ENCODE measurements at regions of chr2 and their contacts with region 1.

Region 1: GRCh38 chr2:121356058-121356640 is 71.1 kb upstream of the TFCP2L1 start:
- DNase-seq: no peak
- H3K4me3 Mint-ChIP-seq: no peak overlapping the region
- H3K27ac Mint-ChIP-seq: no peak overlapping the region
- H3K4me1 Mint-ChIP-seq: peaks cover 2% of the 10 kb centered on the region
- H3K27me3 Mint-ChIP-seq: no peaks in the 10 kb centered on the region

Region 2: DNA sequence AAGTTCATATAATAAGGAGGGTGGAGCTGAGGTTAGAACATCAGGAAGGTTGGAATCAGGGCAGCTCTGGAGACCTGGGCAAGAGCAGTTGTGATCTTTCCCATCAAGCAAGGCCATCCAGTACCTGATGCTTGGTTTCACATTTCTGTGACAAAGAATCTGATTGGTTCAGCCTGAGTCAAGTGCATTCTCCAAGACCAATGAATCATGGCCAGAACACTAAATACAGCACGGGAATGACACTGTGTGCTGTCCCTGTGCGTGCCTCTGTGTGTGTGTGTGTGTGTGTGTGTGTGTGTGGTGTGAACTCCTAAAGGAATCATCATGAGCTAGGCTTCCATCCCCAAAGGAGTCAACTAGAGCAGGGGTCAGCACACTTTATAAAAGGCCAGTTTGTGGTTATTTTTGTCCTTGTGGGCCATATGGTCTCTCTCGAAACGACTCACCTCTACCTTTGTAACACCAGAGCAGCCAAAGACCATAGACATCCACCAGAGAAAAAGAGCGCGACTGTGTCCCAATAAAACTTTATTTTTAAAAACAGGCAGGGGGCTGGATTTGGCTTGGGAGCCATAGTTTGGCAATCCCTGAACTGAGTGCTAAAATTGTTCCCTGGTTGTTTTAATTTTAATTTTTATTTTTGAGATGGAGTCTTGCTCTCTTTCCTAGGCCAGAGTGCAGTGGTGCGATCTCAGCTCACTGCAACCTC is 910.6 kb before region 1 on chr2:
- CTCF ChIA-PET with region 1: no interaction called
- POLR2A ChIA-PET with region 1: no interaction called
- intact Hi-C with region 1: no loop called
- DNase-seq: no peak
- H3K4me3 Mint-ChIP-seq: no peak overlapping the region
- H3K27ac Mint-ChIP-seq: no peak overlapping the region
- H3K4me1 Mint-ChIP-seq: peaks cover 6% of the 10 kb centered on the region
- H3K27me3 Mint-ChIP-seq: peaks cover 40% of the 10 kb centered on the region

Region 3: DNA sequence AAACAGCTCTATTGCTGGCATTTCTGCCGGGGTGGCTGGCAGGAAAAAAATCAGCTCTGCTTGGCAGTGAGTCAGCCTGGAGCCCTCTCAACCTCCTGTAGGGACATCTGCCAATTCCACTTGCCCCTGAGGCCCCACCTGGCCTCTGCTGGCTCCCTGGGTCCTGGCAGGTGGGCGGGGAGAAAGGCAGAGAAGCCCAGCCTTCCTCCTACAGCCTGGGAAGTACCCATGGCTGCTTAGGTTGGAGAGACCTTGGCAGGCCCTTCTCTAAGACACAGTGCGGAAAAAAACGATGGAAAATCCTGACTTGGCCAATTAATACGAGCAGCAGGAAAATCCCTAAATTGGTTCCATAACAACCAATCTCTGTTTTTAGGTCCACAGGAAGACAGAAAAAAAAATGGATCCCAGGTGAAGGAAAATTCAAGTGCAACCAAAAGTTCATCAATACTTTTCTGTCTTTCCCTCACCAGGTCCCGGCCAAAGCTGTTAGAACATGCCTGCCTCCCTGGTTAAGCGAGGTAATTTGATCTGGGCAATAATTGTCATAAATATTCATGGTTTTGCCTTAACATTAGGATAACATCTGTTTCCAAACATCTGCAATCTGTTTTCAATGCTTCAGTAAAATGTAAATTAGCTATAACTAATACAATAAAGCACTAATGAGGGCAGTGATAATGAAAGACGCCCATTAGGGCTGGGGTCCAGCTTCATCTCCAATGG is 317.1 kb before region 1 on chr2:
- CTCF ChIA-PET with region 1: no interaction called
- POLR2A ChIA-PET with region 1: no interaction called
- intact Hi-C with region 1: no loop called
- DNase-seq: no peak
- H3K4me3 Mint-ChIP-seq: no peak overlapping the region
- H3K27ac Mint-ChIP-seq: no peak overlapping the region
- H3K4me1 Mint-ChIP-seq: no peaks in the 10 kb centered on the region
- H3K27me3 Mint-ChIP-seq: no peaks in the 10 kb centered on the region

Region 4: DNA sequence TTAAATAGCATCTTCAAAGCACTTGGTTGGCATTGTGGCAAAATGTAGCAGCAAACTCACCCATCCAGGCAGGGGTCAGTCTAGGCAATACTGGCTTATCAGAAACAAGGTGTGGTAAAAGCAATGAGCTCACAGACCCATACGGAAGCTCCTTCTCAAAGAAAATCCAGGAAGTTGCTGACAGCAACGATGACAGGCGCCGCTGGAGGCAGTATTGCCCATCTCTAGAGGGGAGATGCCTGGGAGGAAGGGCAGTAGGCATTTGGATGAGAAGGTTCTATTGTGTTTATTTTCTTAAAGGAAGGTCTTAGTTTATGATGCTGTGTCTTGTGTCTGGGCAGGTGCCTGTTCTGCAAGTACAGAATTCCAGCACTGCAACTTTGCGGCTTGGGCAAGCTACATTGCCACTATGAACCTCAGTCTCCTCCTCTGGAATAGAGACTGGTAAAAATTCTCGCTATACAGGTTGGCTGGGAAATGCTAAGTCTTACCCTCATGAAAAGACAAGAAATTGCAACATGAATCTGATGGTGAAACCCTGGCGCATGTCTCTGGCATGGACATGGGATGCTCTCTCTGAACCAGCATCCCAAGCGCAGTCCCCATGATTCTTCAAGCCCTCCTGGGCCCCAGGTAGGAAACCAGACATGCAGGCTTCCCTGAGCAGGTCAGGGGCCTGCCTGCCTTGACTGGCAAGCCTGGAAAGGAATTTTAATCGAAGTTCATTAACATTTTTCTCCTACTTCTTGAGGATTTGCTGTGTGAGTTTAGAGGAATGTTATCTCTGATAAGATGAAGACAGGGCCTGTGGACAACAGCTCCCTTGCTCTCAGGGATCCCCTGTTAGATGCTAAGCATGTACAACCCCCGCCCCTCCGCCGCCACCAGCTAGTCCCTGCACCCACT is 227.1 kb before region 1 on chr2:
- CTCF ChIA-PET with region 1: interaction called, 11 read pairs
- POLR2A ChIA-PET with region 1: no interaction called
- intact Hi-C with region 1: no loop called
- DNase-seq: peak; percentile 41
- H3K4me3 Mint-ChIP-seq: no peak overlapping the region
- H3K27ac Mint-ChIP-seq: no peak overlapping the region
- H3K4me1 Mint-ChIP-seq: no peaks in the 10 kb centered on the region
- H3K27me3 Mint-ChIP-seq: peaks cover 4% of the 10 kb centered on the region

Region 5: GRCh38 chr2:121345887-121346286 is 10.3 kb before region 1 on chr2:
- CTCF ChIA-PET with region 1: interaction called, 19 read pairs
- POLR2A ChIA-PET with region 1: no interaction called
- intact Hi-C with region 1: no loop called
- DNase-seq: no peak
- H3K4me3 Mint-ChIP-seq: no peak overlapping the region
- H3K27ac Mint-ChIP-seq: no peak overlapping the region
- H3K4me1 Mint-ChIP-seq: no peaks in the 10 kb centered on the region
- H3K27me3 Mint-ChIP-seq: no peaks in the 10 kb centered on the region

Measured in activated CD4-positive, alpha-beta memory T cell treated with anti-CD3 and anti-CD28 coated beads for 36 hours (primary cell).